Activated CD4-positive, alpha-beta T cell treated with anti-CD3 and anti-CD28 coated beads, Interleukin-2, amount 10 ng/mL, durations not matched to agents 24 days and 14 days (primary cell): ENCODE measurements at regions of chr15 and their contacts with region 1.

Region 1: GRCh38 chr15:76139368-76140073 is 79.7 kb downstream of the TMEM266 start:
- DNase-seq: peak; percentile 93
- H3K4me3 Mint-ChIP-seq: no peak overlapping the region
- H3K27ac Mint-ChIP-seq: no peak overlapping the region
- H3K4me1 Mint-ChIP-seq: peaks cover 4% of the 10 kb centered on the region
- H3K27me3 Mint-ChIP-seq: peaks cover 32% of the 10 kb centered on the region

Region 2: DNA sequence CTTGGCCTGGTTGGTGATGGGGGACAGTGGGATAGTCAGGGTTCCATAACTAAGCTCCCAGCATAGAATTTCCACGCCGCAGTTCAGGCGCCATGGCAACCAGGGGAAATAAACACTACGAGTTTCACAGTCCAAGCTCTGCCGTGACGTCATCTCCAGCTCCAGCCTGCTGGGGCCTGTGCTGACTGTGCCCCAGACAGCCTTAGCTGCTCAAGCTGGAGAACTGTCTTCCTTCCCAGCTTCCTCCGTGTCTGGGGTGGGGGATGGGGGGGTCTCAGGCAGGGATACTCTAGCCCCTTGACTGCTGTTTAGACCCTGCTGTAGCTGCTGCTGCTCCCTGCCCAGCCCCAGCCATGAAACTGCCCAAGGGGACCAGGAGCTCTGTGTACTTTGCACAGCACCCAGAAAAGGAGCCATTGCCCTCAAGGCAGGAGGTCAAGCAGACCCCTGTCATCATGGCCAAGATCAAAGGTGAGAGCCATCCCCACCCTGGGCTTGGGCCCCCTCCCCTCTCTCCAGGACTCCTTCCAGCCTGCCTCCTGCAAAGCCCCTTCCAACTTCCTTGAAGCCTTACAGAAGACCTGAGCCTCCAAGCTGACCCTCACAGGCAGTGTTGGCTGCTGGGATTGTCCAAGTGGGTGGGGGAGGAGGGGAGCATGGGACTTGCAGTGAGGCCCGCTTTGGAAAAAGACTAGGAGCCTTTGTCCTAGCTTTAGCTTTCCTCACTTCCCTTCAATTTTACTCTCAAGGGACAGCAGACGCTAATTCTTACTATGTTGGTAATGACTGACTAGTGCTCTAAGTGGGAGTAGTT is 415.5 kb before region 1 on chr15:
- intact Hi-C with region 1: no loop called
- DNase-seq: peak; percentile 80
- H3K4me3 Mint-ChIP-seq: no peak overlapping the region
- H3K27ac Mint-ChIP-seq: no peak overlapping the region
- H3K4me1 Mint-ChIP-seq: peaks cover 8% of the 10 kb centered on the region
- H3K27me3 Mint-ChIP-seq: peaks cover 4% of the 10 kb centered on the region

Region 3: GRCh38 chr15:75809986-75810750 is 329.4 kb before region 1 on chr15:
- intact Hi-C with region 1: loop called (anchors 10 kb)
- DNase-seq: peak; percentile 65
- H3K4me3 Mint-ChIP-seq: no peak overlapping the region
- H3K27ac Mint-ChIP-seq: no peak overlapping the region
- H3K4me1 Mint-ChIP-seq: no peaks in the 10 kb centered on the region
- H3K27me3 Mint-ChIP-seq: peaks cover 20% of the 10 kb centered on the region

Region 4: GRCh38 chr15:76802411-76802810 is 662.9 kb after region 1 on chr15:
- intact Hi-C with region 1: no loop called
- DNase-seq: no peak
- H3K4me3 Mint-ChIP-seq: no peak overlapping the region
- H3K27ac Mint-ChIP-seq: no peak overlapping the region
- H3K4me1 Mint-ChIP-seq: no peaks in the 10 kb centered on the region
- H3K27me3 Mint-ChIP-seq: no peaks in the 10 kb centered on the region